ENCODE measurements at regions of chr16 and their contacts with region 1.

Region 1: DNA sequence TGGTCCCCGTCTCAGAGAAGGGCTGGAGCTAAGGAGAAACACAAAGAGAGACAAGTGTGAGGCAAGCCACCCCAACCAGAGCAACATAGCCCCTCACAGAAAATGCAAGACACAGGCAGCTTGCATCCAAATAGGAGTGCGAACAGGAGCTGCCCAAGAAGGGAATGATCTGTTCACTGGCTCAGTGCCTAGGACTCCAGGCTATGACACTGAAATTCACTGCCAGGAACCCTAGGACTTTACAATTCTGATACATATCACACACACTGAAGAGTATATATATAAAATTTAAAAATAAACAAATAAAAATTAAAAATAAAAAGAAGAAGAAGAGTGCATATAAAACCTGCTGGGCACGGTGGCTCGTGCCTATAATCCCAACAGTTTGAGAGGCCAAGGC is 5.2 kb downstream of the ZNF23 start:
- DNase-seq: no peak
- H3K4me3 ChIP-seq: no peak overlapping the region
- H3K27ac ChIP-seq: no peak overlapping the region
- H3K4me1 ChIP-seq: peaks cover 16% of the 10 kb centered on the region
- H3K27me3 ChIP-seq: no peaks in the 10 kb centered on the region
- CTCF ChIP-seq: no peak

Region 2: GRCh38 chr16:71493213-71493612 is 36.4 kb after region 1 on chr16:
- intact Hi-C with region 1: loop called (anchors 5 kb)
- DNase-seq: no peak
- H3K4me3 ChIP-seq: no peak overlapping the region
- H3K27ac ChIP-seq: no peak overlapping the region
- H3K4me1 ChIP-seq: no peaks in the 10 kb centered on the region
- H3K27me3 ChIP-seq: peaks cover 31% of the 10 kb centered on the region
- CTCF ChIP-seq: no peak

Measured in left ventricle myocardium inferior (tissue), 1 donor.